HepG2 (cell line): ENCODE measurements at regions of chr2 and their contacts with region 1.

Region 1: GRCh38 chr2:55519938-55520885 is 694 bp downstream of the CFAP36 start:
- DNase-seq: peak; percentile 25
- ATAC-seq: peak; percentile 46
- H3K4me3 ChIP-seq: peak overlapping the region; percentile 66 to 98 (median 91)
- H3K27ac ChIP-seq: peak overlapping the region; percentile 2
- H3K4me1 ChIP-seq: peaks cover 13% of the 10 kb centered on the region
- H3K27me3 ChIP-seq: no peaks in the 10 kb centered on the region; a peak in 1 of 5 replicates
- CTCF ChIP-seq: no peak
- EP300 ChIP-seq: no peak
- POLR2A ChIP-seq: no peak
- RAD21 ChIP-seq: no peak

Region 2: DNA sequence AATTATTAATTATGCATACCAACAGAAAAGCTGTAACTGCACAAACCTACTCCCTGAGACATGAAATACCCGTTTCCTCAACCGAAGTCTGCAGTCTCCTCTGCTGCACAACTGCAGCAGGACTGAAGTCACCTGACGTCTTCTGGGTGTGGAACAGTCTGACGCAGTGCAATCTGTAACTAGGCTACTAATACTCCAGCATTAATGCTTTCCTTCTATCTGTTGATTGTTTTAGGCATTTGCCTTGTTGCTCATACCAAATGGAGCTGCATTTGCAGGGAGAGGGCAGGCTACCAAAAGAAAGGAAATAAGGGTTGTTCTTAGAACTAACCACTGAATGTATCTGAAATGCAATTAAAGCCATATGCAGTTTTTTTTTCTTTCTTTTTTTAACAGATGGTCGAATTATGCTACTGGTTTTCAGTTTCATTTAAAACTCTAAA is 510.0 kb before region 1 on chr2:
- CTCF ChIA-PET with region 1: no interaction called
- POLR2A ChIA-PET with region 1: no interaction called
- in situ Hi-C with region 1: no loop called
- intact Hi-C with region 1: loop called (anchors 10 kb)
- DNase-seq: no peak
- ATAC-seq: no peak
- H3K4me3 ChIP-seq: no peak overlapping the region
- H3K27ac ChIP-seq: no peak overlapping the region
- H3K4me1 ChIP-seq: peaks cover 57% of the 10 kb centered on the region
- H3K27me3 ChIP-seq: no peaks in the 10 kb centered on the region
- CTCF ChIP-seq: no peak
- EP300 ChIP-seq: no peak
- POLR2A ChIP-seq: no peak
- RAD21 ChIP-seq: no peak

Region 3: GRCh38 chr2:55232084-55232862 is 287.9 kb before region 1 on chr2 and contains the starts of genes CLHC1 and RPS27A:
- CTCF ChIA-PET with region 1: no interaction called
- POLR2A ChIA-PET with region 1: interaction called, 6 read pairs
- in situ Hi-C with region 1: no loop called
- intact Hi-C with region 1: loop called (anchors 10 kb)
- DNase-seq: peak; percentile 99
- ATAC-seq: peak; percentile 96
- H3K4me3 ChIP-seq: peak within 1 kb of the TSS; percentile 82 to 95 (median 93)
- H3K27ac ChIP-seq: peak within 1 kb of the TSS; percentile 98
- H3K4me1 ChIP-seq: peaks cover 59% of the 10 kb centered on the region
- H3K27me3 ChIP-seq: no peaks in the 10 kb centered on the region; a peak in 1 of 5 replicates
- CTCF ChIP-seq: no peak
- EP300 ChIP-seq: 0 out of 4 replicates have a peak, but pooled peaks of 1 of the 2 experiments have one; percentile 28
- POLR2A ChIP-seq: peak; percentile 98
- RAD21 ChIP-seq: peak; percentile 50
- total RNA-seq, gene CLHC1: 12.1 and 12.6 TPM in 2 replicates
- total RNA-seq, gene RPS27A: 2,779 and 3,447 TPM in 2 replicates

Region 4: DNA sequence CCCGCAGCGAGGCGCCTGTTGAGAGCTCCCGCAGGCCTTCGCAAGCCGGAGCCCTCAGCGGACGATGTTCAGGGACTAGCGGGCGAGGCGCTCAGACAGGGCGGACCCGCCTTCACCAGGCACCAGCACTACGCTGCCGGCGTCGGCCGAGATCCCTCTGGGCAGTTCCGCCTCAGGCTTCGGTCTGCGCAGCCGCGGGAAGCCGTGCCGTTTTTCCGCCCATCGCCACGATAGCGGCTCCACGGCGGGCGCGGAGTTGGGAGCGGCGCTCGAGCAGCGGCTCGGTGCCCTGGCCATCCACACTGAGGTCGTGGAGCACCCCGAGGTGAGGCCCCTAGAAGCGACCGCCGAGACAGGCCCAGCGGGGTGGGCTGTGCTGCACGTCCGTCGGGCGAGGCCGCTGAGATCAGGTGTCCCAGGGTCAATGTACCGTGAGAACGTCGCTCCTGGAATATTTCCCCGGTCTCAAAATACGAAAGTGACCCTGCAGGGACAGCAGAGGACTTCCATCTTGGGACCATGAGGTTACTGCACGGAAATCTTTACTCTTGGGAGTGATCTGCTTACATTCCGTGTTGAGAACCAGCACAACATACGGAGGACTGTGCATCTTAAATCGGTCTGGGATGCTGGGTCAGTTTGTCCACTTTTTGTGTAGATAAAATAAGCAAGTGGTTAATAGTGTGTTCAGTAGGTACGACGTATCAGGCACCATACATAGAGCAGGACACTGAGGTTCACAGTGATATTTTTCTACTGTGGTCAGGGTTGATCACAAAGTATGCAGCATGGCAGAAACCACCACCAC is 237.9 kb before region 1 on chr2:
- CTCF ChIA-PET with region 1: no interaction called
- POLR2A ChIA-PET with region 1: interaction called, 4 read pairs
- in situ Hi-C with region 1: no loop called
- intact Hi-C with region 1: loop called (anchors 10 kb)
- DNase-seq: peak; percentile 79
- ATAC-seq: peak; percentile 98
- H3K4me3 ChIP-seq: peak overlapping the region; percentile 69 to 82 (median 81)
- H3K27ac ChIP-seq: peak overlapping the region; percentile 89
- H3K4me1 ChIP-seq: peaks cover 70% of the 10 kb centered on the region
- H3K27me3 ChIP-seq: no peaks in the 10 kb centered on the region; a peak in 1 of 5 replicates
- CTCF ChIP-seq: peak; percentile 40
- EP300 ChIP-seq: no peak
- POLR2A ChIP-seq: peak; percentile 92
- RAD21 ChIP-seq: peak; percentile 70

Region 5: DNA sequence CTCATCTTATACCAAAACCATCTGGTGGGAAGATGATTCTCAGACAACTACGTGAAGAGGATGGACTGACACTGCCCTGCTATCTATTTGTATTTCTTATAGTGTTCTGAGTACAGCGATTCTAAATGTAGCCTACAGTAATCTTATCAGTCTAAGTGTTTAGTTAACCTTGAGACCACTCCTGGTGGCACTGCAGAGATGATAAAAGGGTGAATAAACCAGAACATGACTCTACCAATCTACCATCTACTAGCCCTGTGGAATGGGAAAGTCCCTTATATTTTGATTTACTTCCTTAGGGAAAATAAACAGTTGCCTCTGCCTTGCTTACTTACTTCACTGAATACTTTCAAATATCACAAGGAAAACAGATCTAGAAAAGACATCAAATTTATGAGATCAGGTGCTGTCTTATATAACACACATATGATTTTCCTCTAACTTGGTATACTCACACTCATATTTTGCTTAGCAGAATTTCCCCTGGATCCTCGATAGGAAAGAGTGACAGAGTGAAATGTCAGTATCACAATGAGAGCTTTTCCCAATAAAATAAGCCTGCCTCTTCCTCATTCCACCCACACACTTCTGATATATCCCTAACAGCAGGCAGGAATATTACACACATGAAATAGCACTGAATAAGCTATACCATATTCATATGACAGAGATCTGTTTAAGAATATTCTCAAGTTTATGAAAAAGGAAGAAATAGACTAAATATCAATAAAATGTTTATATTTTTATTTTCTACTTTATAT is 192.6 kb before region 1 on chr2:
- CTCF ChIA-PET with region 1: no interaction called
- POLR2A ChIA-PET with region 1: interaction called, 3 read pairs
- in situ Hi-C with region 1: no loop called
- intact Hi-C with region 1: loop called (anchors 10 kb)
- DNase-seq: no peak
- ATAC-seq: no peak
- H3K4me3 ChIP-seq: no peak overlapping the region
- H3K27ac ChIP-seq: no peak overlapping the region
- H3K4me1 ChIP-seq: no peaks in the 10 kb centered on the region
- H3K27me3 ChIP-seq: no peaks in the 10 kb centered on the region
- CTCF ChIP-seq: no peak
- EP300 ChIP-seq: no peak
- POLR2A ChIP-seq: no peak
- RAD21 ChIP-seq: no peak

Region 6: DNA sequence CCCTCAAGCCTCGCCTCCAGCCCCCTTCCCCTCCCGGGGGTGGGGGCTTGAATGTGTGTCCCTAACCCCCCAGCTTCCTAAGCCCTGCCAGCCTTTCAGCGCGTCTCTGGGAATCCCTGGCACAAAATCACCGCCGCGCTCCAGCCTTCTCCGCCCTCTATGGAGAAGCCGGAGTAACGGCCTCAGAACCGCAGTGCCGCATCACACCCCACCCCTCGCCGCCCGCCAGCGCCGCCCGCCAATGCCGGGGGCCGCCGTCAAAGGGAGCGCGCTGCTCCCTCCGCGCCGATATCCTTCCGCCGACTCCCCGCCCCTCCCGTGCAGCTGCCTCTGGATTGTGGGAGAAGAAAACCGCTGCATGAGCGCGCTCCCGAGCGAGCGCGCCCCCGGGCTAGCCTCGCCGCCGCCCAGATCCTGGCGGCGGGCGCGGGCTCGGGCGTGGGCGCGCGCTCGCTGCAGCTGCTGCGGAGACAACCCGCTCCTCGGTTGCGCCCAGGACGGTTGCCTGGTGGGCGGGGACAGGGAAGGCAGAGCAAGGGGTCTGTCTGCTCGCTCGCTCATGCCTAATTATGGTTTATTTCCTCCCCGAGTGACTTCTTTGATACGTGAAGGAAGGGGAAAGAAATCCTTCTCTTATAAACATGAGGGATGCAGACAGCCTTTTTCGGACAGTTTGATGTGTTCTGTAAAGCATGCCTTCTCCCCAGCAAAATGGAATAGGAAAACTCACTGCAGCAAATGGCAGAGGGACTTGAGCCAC is 100.4 kb before region 1 on chr2 and contains the start of gene CCDC88A:
- CTCF ChIA-PET with region 1: no interaction called
- POLR2A ChIA-PET with region 1: interaction called, 13 read pairs
- in situ Hi-C with region 1: no loop called
- intact Hi-C with region 1: loop called (anchors 5 kb)
- DNase-seq: peak; percentile 92
- ATAC-seq: peak; percentile 93
- H3K4me3 ChIP-seq: peak within 1 kb of the TSS; percentile 88 to 98 (median 89)
- H3K27ac ChIP-seq: peak within 1 kb of the TSS; percentile 86
- H3K4me1 ChIP-seq: peaks cover 69% of the 10 kb centered on the region
- H3K27me3 ChIP-seq: peaks cover 0 to 4% of the 10 kb centered on the region in 2 experiments; a peak in 1 of 5 replicates
- CTCF ChIP-seq: peak; percentile 58
- EP300 ChIP-seq: peak; percentile 72 to 76; a peak in 3 of 4 replicates
- POLR2A ChIP-seq: peak; percentile 92 to 97
- RAD21 ChIP-seq: peak; percentile 82
- total RNA-seq, gene CCDC88A: 84.1 and 112 TPM in 2 replicates

Region 7: GRCh38 chr2:55617175-55618024 is 97.2 kb after region 1 on chr2 and contains the start of gene PPP4R3B:
- CTCF ChIA-PET with region 1: no interaction called
- POLR2A ChIA-PET with region 1: interaction called, 20 read pairs
- in situ Hi-C with region 1: no loop called
- intact Hi-C with region 1: no loop called
- DNase-seq: peak; percentile 99
- ATAC-seq: peak; percentile 89
- H3K4me3 ChIP-seq: peak within 1 kb of the TSS; percentile 90 to 99 (median 93)
- H3K27ac ChIP-seq: peak within 1 kb of the TSS; percentile 95
- H3K4me1 ChIP-seq: peaks cover 42% of the 10 kb centered on the region
- H3K27me3 ChIP-seq: peaks cover 0 to 5% of the 10 kb centered on the region in 2 experiments; a peak in 1 of 5 replicates
- CTCF ChIP-seq: peak; percentile 70
- EP300 ChIP-seq: peak in 1 of 2 experiments; percentile 73; a peak in 2 of 4 replicates
- POLR2A ChIP-seq: peak; percentile 92 to 98
- RAD21 ChIP-seq: peak; percentile 39; the same call in 1 of the 2 replicates
- total RNA-seq, gene PPP4R3B: 53.0 and 86.9 TPM in 2 replicates

Region 8: DNA sequence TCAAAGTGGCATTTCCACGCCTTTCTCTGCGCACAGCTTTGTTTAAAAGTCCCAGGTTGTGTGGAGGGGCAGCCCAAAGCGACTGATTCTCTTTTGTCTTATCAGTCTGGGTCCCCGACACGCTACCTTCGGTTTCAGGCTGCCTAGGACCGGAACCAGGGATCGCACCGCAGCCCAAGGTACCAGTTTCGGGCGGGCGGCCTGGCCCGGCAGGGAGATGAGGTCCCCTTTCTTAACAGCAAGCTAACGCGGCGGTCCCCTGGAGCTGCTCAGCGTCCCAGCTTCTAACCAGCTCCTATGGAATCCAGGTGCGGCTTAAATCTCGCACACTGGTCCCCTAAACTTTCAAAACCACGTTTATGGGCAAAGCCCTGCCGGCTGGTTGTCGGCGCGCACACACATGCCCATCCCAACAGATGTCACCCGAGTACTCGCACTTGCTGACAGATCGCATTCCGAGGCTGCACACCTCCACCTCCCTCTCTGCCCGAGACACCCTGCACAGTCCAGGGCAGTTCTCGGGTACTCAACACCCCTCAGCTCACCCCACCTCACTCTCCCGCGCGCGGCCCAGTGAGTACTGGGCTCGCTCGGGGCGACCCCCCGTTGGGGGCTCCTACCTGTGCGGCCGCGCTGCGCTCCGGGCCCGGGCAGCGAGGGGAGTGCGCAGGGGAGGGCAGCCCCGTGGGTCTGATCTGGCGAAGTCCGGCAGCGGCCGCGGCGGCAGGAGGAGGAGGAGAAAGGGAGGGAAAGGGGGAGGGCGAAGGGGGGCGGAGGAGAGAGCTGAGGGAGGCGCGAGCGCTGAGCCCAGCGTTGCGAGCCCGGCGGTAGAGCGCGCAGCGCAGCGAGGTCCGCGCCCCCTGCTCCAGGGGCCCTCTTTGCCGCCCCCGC is 403.1 kb after region 1 on chr2 and contains the start of gene EFEMP1:
- CTCF ChIA-PET with region 1: no interaction called
- POLR2A ChIA-PET with region 1: no interaction called
- in situ Hi-C with region 1: no loop called
- intact Hi-C with region 1: no loop called
- DNase-seq: no peak
- ATAC-seq: peak; percentile 92
- H3K4me3 ChIP-seq: peak within 1 kb of the TSS in 1 of 3 experiments; percentile 17; a peak in 1 of 6 replicates
- H3K27ac ChIP-seq: no peak within 1 kb of the TSS
- H3K4me1 ChIP-seq: no peaks in the 10 kb centered on the region
- H3K27me3 ChIP-seq: peaks cover 4 to 27% of the 10 kb centered on the region in 2 experiments
- CTCF ChIP-seq: no peak
- EP300 ChIP-seq: no peak
- POLR2A ChIP-seq: no peak
- RAD21 ChIP-seq: no peak
- total RNA-seq, gene EFEMP1: not detected in 2 replicates